ENCODE measurements at regions of chr14 and their contacts with region 1.

Region 1: GRCh38 chr14:105570513-105570912 is 44.1 kb downstream of the TMEM121 start:
- DNase-seq: no peak
- CTCF ChIP-seq: no peak

Region 2: DNA sequence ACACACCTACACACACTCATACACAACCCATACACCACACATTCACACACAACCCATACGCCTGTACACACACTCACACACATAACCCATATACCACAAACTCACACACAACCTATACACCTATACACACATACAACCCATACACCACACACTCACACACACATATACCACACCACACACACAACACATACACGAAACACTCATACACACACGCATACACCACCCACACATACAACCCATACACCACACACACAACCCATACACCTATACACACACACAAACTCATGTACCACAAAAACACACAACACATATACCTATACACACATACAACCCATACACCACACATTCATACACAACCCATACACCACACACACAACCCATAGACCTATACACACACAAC is 120.2 kb after region 1 on chr14:
- in situ Hi-C with region 1: loop called (anchors 5 kb)
- DNase-seq: no peak
- CTCF ChIP-seq: no peak

Region 3: DNA sequence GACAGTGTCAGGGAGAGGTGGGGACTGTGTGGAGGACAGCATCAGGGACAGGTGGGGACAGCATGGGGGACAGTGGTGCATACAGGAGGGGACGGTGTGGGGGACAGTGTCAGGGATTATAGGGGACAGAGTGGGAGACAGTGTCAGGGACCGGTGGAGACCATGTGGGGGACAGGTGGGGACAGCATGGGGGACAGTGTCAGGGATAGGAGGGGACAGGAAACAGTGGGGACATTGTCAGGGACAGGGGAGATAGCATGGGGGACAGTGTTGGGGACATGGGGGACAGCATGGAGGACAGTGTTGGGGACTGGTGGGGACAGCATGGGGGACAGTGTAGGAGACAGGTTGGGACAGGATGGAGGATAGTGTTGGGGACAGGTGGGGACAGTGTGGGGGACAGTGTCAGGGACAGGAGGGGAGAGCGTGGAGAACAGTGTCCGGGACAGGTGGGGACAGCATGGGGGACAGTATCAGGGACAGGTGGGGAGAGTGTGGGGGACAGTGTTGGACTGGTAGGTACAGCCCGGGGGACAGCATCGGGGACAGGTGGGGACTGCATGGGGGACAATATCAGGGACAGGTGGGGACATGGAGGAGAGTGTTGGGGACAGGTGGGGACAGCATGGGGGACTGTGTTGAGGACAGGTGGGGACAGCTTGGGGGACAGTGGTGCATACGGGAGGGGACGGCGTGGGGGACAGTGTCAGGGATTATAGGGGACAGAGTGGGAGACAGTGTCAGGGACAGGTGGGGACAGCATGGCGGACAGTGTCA is 167.9 kb after region 1 on chr14:
- in situ Hi-C with region 1: no loop called
- DNase-seq: peak; percentile 3
- CTCF ChIP-seq: no peak